ENCODE measurements at regions of chr10 and their contacts with region 1.

Region 1: GRCh38 chr10:48981310-48981907 is 41.8 kb upstream of the LRRC18 start:
- DNase-seq: peak; percentile 28
- ATAC-seq: peak; percentile 37
- H3K4me3 Mint-ChIP-seq: no peak overlapping the region
- H3K27ac Mint-ChIP-seq: peak overlapping the region; percentile 56
- H3K4me1 Mint-ChIP-seq: no peaks in the 10 kb centered on the region
- H3K27me3 Mint-ChIP-seq: no peaks in the 10 kb centered on the region
- CTCF ChIP-seq: peak; percentile 23

Region 2: GRCh38 chr10:49001402-49001801 is 20.0 kb after region 1 on chr10:
- CTCF ChIA-PET with region 1: no interaction called
- POLR2A ChIA-PET with region 1: no interaction called
- intact Hi-C with region 1: no loop called
- DNase-seq: no peak
- ATAC-seq: no peak
- H3K4me3 Mint-ChIP-seq: no peak overlapping the region
- H3K27ac Mint-ChIP-seq: no peak overlapping the region
- H3K4me1 Mint-ChIP-seq: no peaks in the 10 kb centered on the region
- H3K27me3 Mint-ChIP-seq: no peaks in the 10 kb centered on the region
- CTCF ChIP-seq: no peak

Region 3: DNA sequence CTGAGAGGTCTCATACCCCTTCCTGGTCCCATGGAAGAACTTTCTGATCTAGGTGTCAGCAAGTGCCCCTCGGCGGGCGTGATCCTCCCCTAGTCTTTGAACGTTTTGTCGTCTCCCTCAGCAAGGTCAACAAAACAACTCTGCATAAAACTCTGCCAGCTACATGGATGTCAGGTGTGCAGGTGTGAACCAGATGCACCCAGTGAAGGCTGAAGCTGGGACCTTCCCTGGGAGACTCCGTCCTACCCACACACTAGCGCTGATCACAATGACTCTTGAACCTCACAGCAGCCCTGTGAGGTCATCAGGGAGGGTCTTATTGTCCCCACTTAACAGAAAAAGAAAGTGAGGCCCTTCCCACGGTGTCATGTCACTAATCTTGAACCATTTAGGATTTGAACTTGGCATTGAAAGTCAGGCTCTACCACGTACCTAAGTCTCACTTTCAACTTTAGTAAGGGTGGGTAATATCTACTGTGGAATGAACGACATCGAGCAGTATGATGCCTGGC is 65.8 kb after region 1 on chr10:
- CTCF ChIA-PET with region 1: no interaction called
- POLR2A ChIA-PET with region 1: no interaction called
- intact Hi-C with region 1: no loop called
- DNase-seq: no peak
- ATAC-seq: no peak
- H3K4me3 Mint-ChIP-seq: no peak overlapping the region
- H3K27ac Mint-ChIP-seq: no peak overlapping the region
- H3K4me1 Mint-ChIP-seq: no peaks in the 10 kb centered on the region
- H3K27me3 Mint-ChIP-seq: peaks cover 12% of the 10 kb centered on the region
- CTCF ChIP-seq: no peak

Region 4: DNA sequence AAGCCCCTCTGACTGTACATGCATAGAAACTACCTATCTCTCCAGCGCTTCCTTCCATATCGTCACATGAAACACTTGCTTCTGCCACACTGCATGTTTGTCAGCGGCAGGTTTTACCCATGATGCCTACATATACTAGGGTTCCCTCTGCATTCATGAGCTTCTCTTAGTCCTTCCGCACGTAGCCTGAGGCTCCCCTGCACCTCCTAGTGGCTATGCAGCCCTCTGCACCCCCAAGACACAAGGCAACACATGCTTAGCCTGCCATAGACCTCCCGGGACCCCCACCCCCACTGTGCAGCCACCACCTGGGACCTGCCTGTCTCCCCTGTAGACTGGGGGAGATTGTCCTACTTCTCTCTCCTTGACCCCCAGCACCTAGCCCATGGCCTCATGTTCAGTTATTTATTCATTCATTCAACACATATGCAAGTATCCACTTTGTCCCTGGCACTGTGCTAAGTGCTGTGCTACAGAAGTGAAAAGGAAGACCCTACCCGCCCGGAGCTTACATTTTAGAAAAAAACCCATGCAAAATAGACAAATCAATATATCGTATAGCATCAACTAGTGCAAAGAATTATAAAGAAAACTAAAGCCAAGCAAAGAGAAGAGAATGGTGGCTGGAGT is 183.3 kb after region 1 on chr10:
- CTCF ChIA-PET with region 1: no interaction called
- POLR2A ChIA-PET with region 1: no interaction called
- intact Hi-C with region 1: loop called (anchors 1 kb)
- DNase-seq: no peak
- ATAC-seq: peak; percentile 96
- H3K4me3 Mint-ChIP-seq: no peak overlapping the region
- H3K27ac Mint-ChIP-seq: no peak overlapping the region
- H3K4me1 Mint-ChIP-seq: peaks cover 12% of the 10 kb centered on the region
- H3K27me3 Mint-ChIP-seq: no peaks in the 10 kb centered on the region
- CTCF ChIP-seq: no peak

Region 5: GRCh38 chr10:49300140-49300974 is 318.9 kb after region 1 on chr10:
- CTCF ChIA-PET with region 1: no interaction called
- POLR2A ChIA-PET with region 1: no interaction called
- intact Hi-C with region 1: loop called (anchors 10 kb)
- DNase-seq: no peak
- ATAC-seq: peak; percentile 10
- H3K4me3 Mint-ChIP-seq: no peak overlapping the region
- H3K27ac Mint-ChIP-seq: no peak overlapping the region
- H3K4me1 Mint-ChIP-seq: peaks cover 23% of the 10 kb centered on the region
- H3K27me3 Mint-ChIP-seq: no peaks in the 10 kb centered on the region
- CTCF ChIP-seq: no peak

Region 6: DNA sequence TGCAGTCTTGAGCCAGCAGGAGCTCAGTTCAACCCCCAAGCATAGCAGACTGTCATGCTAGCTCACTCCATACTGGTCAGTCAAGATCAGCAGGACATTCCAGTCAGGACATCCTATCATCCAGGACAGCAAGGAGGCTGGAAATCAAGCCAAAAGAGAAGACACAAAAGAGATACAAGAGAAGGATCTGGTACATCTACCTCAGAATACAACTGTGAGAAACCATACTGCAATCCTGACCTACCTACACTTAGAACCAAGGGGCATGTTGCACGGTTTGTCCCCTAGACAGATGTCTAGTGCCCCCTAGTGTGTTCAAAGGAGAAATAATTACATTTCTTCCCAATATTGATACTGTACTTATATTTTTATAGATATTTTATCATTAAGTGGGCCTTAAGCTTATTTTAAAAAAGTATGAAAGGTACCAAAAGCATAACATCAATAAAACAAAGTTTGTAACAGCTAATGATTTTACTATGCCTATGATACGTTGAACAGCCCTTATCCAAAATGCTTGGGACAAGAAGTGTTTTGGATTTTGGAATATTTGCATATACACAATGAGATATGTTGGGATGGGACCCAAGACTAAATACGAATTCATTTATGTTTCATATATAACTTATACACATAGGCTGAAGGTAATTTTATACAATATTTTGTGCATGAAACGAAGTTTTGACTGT is 530.9 kb after region 1 on chr10:
- CTCF ChIA-PET with region 1: interaction called, 4 read pairs
- POLR2A ChIA-PET with region 1: no interaction called
- intact Hi-C with region 1: loop called (anchors 1 kb)
- DNase-seq: no peak
- ATAC-seq: peak; percentile 42
- H3K4me3 Mint-ChIP-seq: no peak overlapping the region
- H3K27ac Mint-ChIP-seq: no peak overlapping the region
- H3K4me1 Mint-ChIP-seq: peaks cover 20% of the 10 kb centered on the region
- H3K27me3 Mint-ChIP-seq: no peaks in the 10 kb centered on the region
- CTCF ChIP-seq: no peak

Region 7: DNA sequence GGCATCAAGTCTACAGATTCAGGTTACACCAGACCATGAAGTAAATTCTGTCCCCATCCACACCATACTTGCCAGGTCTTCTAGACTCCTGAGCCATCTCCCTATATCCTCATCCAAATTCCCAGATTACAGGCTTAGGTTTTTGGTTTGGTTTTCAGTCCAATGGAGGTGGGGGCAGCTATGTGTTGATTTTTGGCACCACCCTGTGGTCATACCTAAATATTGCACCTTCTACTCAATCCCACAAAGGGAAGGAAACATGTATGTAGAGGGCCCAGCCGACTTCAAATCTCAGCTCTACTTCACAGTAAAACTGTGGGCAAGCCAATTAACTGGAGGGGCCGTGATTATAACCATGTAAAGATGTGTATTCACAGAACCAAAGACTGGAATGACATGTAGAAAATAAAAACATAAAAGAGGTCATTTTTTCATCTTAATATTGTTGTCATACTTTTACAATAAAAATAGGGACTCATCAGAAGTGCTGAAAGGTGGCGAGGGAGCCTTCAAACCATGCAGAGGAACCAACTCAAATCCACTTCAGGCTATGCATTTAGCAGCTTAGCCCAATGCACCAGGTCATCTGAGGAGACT is 537.7 kb after region 1 on chr10:
- CTCF ChIA-PET with region 1: interaction called, 3 read pairs
- POLR2A ChIA-PET with region 1: no interaction called
- intact Hi-C with region 1: loop called (anchors 1 kb)
- DNase-seq: no peak
- ATAC-seq: peak; percentile 66
- H3K4me3 Mint-ChIP-seq: no peak overlapping the region
- H3K27ac Mint-ChIP-seq: no peak overlapping the region
- H3K4me1 Mint-ChIP-seq: peaks cover 7% of the 10 kb centered on the region
- H3K27me3 Mint-ChIP-seq: no peaks in the 10 kb centered on the region
- CTCF ChIP-seq: no peak

Measured in activated B cell treated with CpG ODN at 0.5 μM for 24 hours (primary cell).